ENCODE measurements at regions of chr10 and their contacts with region 1.

Region 1: GRCh38 chr10:116287906-116288501 is 15.0 kb upstream of the GFRA1 start:
- DNase-seq: peak; percentile 18
- ATAC-seq: peak; percentile 54
- H3K4me3 ChIP-seq: no peak overlapping the region
- H3K27ac ChIP-seq: no peak overlapping the region
- H3K4me1 ChIP-seq: no peaks in the 10 kb centered on the region
- H3K27me3 ChIP-seq: no peaks in the 10 kb centered on the region
- CTCF ChIP-seq: peak; percentile 63
- EP300 ChIP-seq: no peak
- POLR2A ChIP-seq: no peak
- RAD21 ChIP-seq: no peak

Region 2: GRCh38 chr10:115355162-115355760 is 932.7 kb before region 1 on chr10:
- CTCF ChIA-PET with region 1: no interaction called
- POLR2A ChIA-PET with region 1: no interaction called
- in situ Hi-C with region 1: no loop called
- intact Hi-C with region 1: loop called (anchors 1 kb)
- DNase-seq: peak; percentile 63
- ATAC-seq: peak; percentile 87
- H3K4me3 ChIP-seq: no peak overlapping the region
- H3K27ac ChIP-seq: no peak overlapping the region
- H3K4me1 ChIP-seq: no peaks in the 10 kb centered on the region
- H3K27me3 ChIP-seq: no peaks in the 10 kb centered on the region
- CTCF ChIP-seq: peak; percentile 77
- EP300 ChIP-seq: no peak
- POLR2A ChIP-seq: no peak
- RAD21 ChIP-seq: no peak

Region 3: DNA sequence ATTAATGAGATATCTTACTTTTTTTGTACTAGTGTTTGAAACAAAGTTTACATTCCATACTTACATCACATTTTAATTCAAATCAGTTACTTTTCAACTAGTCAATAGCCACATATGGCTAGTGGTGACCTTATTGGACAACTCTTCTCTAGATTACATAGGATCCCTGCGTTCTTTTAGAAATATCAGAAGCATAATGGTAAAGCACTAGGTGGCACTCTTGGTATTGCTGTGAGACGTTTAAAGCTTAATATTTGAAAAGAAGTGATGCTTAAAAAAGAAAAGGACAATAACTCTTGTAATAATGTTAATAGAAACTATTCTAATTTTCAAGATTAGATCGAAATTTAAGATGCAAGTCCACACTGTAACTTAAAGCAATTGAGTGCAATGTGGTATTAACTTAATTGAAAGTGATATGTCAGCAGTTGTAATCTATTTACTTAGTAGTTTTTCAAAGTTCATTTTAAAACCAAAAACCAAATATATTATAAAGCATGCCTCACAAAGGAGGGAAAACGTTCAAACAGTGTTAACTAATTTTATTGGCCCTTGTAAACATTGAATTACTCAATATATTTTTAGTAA is 855.7 kb before region 1 on chr10:
- CTCF ChIA-PET with region 1: interaction called, 4 read pairs
- POLR2A ChIA-PET with region 1: no interaction called
- in situ Hi-C with region 1: no loop called
- intact Hi-C with region 1: loop called (anchors 2 kb)
- DNase-seq: peak; percentile 31
- ATAC-seq: peak; percentile 60; the same call in 1 of the 3 replicates
- H3K4me3 ChIP-seq: no peak overlapping the region
- H3K27ac ChIP-seq: no peak overlapping the region
- H3K4me1 ChIP-seq: no peaks in the 10 kb centered on the region
- H3K27me3 ChIP-seq: no peaks in the 10 kb centered on the region
- CTCF ChIP-seq: peak; percentile 57
- EP300 ChIP-seq: no peak
- POLR2A ChIP-seq: no peak
- RAD21 ChIP-seq: no peak

Region 4: DNA sequence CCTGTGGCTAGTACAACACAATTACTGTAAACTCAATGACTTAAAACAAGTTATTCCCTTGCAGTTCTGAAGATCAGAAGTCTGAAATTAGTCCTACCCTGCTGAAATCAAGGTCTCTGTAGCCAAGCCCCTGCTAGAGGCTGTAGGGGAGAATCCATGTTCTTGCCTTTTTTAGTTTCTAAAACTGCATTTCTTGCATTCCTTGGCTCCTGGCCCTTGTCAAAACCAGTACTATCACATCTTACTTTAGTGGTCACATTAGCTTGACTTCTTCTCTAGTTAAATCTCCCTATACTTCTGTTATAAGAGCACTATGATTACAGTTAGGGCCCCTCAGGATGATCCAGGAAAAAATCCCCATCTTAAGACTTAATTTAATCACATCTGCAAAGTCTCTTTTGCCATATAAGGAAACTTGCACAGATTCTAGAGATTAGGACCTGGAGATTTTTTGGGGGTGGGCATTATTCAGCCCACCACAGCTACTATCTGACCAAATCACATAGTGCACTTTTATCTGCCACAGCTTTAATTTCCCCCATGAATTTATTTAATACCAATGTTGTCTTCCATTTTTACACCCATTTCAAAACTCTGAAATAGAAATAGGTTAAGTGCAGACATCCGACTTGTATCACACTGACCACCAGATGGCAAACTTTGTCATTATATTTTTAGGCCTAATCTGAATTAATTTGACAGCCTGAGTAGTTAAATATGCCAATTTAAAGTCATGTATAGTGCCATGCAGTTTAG is 581.8 kb before region 1 on chr10:
- CTCF ChIA-PET with region 1: interaction called, 14 read pairs
- POLR2A ChIA-PET with region 1: no interaction called
- in situ Hi-C with region 1: loop called (anchors 10 kb)
- intact Hi-C with region 1: no loop called
- DNase-seq: peak; percentile 1
- ATAC-seq: no peak
- H3K4me3 ChIP-seq: no peak overlapping the region
- H3K27ac ChIP-seq: no peak overlapping the region
- H3K4me1 ChIP-seq: no peaks in the 10 kb centered on the region
- H3K27me3 ChIP-seq: no peaks in the 10 kb centered on the region
- CTCF ChIP-seq: peak; percentile 38; the same call in 1 of the 2 replicates
- EP300 ChIP-seq: no peak
- POLR2A ChIP-seq: no peak
- RAD21 ChIP-seq: no peak

Region 5: GRCh38 chr10:115801992-115802391 is 486.0 kb before region 1 on chr10:
- CTCF ChIA-PET with region 1: interaction called, 29 read pairs
- POLR2A ChIA-PET with region 1: no interaction called
- in situ Hi-C with region 1: loop called (anchors 10 kb)
- intact Hi-C with region 1: loop called (anchors 1 kb)
- DNase-seq: no peak
- ATAC-seq: no peak
- H3K4me3 ChIP-seq: no peak overlapping the region
- H3K27ac ChIP-seq: no peak overlapping the region
- H3K4me1 ChIP-seq: no peaks in the 10 kb centered on the region
- H3K27me3 ChIP-seq: no peaks in the 10 kb centered on the region; a peak in 1 of 5 replicates
- CTCF ChIP-seq: no peak
- EP300 ChIP-seq: no peak
- POLR2A ChIP-seq: no peak
- RAD21 ChIP-seq: no peak

Region 6: GRCh38 chr10:116026315-116026714 is 261.7 kb before region 1 on chr10:
- CTCF ChIA-PET with region 1: interaction called, 3 read pairs
- POLR2A ChIA-PET with region 1: no interaction called
- in situ Hi-C with region 1: no loop called
- intact Hi-C with region 1: loop called (anchors 1 kb)
- DNase-seq: peak; percentile 3
- ATAC-seq: peak; percentile 93
- H3K4me3 ChIP-seq: no peak overlapping the region
- H3K27ac ChIP-seq: no peak overlapping the region
- H3K4me1 ChIP-seq: no peaks in the 10 kb centered on the region
- H3K27me3 ChIP-seq: no peaks in the 10 kb centered on the region
- CTCF ChIP-seq: peak; percentile 42
- EP300 ChIP-seq: no peak
- POLR2A ChIP-seq: no peak
- RAD21 ChIP-seq: no peak

Region 7: GRCh38 chr10:116080553-116080952 is 207.5 kb before region 1 on chr10:
- CTCF ChIA-PET with region 1: no interaction called
- POLR2A ChIA-PET with region 1: no interaction called
- in situ Hi-C with region 1: no loop called
- intact Hi-C with region 1: loop called (anchors 5 kb)
- DNase-seq: no peak
- ATAC-seq: no peak
- H3K4me3 ChIP-seq: no peak overlapping the region
- H3K27ac ChIP-seq: no peak overlapping the region
- H3K4me1 ChIP-seq: no peaks in the 10 kb centered on the region
- H3K27me3 ChIP-seq: no peaks in the 10 kb centered on the region; a peak in 1 of 5 replicates
- CTCF ChIP-seq: no peak
- EP300 ChIP-seq: no peak
- POLR2A ChIP-seq: no peak
- RAD21 ChIP-seq: no peak